Cardiac septum (tissue), 1 donor: ENCODE measurements at regions of chr7 and their contacts with region 1.

Region 1: GRCh38 chr7:18597754-18598153 is 102.2 kb downstream of the HDAC9 start:
- DNase-seq: no peak

Region 2: DNA sequence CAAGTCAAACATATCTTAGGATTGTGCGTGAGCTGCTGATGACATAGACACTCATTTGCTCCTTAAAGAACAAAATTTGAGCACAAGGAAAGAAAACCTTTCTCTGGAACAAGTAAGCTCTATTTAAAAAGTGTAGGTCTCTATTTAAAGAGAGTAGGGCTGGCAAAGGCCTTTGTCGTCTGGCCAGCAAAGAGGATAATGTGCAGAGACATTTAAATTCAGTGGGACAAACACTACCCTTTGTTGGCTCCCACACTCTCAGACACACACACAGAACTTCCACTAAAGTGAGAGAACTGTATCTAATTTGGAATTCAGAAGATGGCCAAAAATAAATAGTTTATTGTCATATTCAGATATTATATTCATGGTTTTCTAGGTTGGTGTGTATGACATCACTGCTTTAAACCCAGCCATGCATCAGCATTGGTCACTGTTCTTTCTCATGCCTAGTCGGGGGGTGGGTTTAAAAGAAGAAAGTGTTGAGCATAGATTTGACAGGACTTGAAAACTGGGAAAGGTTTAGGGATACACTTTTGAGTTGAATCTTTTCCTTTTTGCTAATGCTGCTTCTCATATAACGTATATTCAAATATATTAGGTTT is 151.7 kb before region 1 on chr7:
- intact Hi-C with region 1: no loop called
- DNase-seq: no peak

Region 3: DNA sequence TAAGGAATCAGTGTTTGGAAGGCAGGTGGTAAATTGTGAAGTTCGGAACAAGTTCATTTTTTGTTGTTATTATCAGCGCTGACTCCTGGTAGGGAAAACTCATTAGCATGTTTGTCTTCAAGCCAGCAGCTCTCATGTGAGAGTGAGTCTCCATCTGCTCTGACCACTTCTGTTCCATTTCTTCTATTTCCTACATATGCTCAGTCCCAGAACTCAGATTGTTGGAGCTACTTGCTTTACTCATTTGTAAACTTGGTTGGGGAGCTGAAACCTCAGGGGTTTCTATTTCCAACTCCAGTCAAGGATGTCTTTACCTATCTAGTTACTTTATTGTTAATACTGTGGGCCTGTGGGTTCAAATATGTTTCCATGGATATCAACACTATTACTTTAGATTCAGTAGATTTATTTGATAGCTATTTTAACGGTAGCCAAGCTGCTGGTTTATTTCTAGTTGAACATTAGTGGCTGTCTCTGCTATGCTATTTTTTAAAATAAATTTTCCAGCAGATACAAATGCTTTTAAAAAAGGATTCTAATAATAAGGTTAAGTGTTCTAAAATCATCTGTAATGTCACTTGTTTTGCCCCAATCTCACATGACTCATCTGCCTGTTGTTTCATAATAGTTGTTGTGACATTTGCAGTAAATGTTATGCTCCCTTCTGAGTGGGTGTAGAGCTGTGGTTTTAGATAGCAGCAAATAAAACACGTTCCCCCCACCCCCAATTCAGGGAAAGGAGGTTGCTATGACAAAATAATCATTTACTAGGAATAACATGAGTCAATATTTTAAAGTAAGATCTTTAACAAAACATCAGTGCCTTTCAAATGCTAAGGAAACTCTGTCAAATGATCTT is 41.1 kb after region 1 on chr7:
- intact Hi-C with region 1: loop called (anchors 5 kb)
- DNase-seq: no peak